GM10248 (cell line): ENCODE measurements at regions of chr7 and their contacts with region 1.

Region 1: DNA sequence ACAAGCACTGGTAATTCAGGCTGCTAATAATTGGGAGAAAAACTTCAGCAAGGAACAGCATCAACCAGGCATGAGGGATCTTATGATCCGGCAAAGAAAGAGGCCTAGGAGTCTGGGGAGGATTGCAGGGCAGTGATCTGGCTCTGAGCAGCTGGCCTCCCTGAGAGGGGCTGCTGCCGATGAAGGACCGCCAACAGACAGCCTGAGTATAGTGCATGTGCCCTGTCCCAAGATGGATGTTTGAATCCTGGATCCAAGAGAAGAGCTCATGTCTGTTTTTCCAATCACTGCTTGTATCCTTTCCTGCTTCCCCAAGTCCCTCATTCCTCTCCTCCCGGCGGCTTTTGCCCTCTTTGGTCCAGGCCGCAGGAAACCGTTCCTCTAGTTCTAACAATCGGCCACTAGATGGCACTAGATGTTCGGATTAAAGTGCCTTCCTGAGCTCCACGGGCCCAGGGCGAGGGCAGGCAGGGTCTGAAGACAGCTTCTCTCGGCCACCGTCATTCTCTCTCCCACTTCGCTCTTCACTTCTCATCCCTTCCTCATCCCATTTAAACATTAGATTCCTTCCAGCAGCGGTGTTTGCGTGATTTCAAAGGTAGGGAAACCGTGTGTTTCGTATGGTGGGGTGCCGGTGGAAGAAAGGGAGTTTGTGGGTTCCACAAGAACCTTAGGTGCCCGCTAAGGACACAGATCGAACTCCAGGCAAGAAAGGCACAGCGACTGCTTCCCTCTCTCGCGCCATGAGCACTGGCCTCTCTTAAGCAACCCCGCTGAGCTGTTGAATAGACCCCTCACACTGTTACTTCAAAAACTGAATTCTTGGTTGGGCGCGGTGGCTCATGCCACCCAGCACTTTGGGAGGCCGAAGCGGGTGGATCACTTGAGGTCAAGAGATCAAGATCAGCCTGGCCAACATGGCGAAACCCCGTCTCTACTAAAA is 82.4 kb downstream of the ADCYAP1R1 start:
- DNase-seq: peak; percentile 75
- CTCF ChIP-seq: peak; percentile 71

Region 2: GRCh38 chr7:30871655-30872054 is 262.9 kb before region 1 on chr7:
- CTCF ChIA-PET with region 1: no interaction called
- POLR2A ChIA-PET with region 1: no interaction called
- DNase-seq: no peak
- CTCF ChIP-seq: no peak

Region 3: DNA sequence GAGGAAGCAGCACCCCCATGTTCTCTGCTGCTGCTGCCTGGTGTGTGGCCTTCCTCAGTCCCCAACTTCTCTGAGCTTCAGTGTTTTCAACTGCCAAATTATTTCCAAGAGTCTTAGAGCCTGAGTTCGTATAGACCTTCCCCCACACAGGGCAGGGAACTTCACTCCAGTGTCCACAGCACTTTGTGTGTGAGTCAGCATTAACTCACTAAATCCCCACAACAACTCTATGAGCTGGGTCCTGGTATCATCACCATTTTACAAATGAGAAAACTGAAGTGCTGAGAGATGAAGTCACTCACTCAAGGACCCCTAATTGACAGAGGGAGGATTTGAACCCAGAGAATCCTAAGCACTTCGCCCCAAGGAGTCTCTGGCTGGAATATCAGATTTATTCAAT is 34.1 kb before region 1 on chr7:
- CTCF ChIA-PET with region 1: interaction called, 14 read pairs
- POLR2A ChIA-PET with region 1: no interaction called
- DNase-seq: no peak
- CTCF ChIP-seq: no peak

Region 4: DNA sequence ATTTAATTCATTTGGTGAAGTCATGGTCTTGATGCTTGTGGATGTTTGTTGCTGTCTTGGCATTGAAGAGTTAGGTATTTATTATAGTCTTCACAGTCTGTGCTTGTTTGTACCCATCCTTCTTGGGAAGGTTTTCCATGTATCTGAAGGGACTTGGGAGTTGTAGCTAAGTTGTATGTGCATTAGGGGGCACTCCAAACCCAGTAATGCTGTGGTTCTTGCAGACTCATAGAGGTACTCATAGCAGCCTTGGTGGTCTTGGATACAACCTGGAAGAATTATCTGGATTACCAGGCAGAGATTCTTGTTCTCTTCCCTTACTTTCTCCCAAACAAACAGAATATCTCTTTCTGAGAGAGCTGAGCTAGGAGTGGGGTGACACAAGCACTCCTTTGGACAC is 10.8 kb after region 1 on chr7:
- CTCF ChIA-PET with region 1: interaction called, 19 read pairs
- POLR2A ChIA-PET with region 1: no interaction called
- DNase-seq: no peak
- CTCF ChIP-seq: no peak

Region 5: DNA sequence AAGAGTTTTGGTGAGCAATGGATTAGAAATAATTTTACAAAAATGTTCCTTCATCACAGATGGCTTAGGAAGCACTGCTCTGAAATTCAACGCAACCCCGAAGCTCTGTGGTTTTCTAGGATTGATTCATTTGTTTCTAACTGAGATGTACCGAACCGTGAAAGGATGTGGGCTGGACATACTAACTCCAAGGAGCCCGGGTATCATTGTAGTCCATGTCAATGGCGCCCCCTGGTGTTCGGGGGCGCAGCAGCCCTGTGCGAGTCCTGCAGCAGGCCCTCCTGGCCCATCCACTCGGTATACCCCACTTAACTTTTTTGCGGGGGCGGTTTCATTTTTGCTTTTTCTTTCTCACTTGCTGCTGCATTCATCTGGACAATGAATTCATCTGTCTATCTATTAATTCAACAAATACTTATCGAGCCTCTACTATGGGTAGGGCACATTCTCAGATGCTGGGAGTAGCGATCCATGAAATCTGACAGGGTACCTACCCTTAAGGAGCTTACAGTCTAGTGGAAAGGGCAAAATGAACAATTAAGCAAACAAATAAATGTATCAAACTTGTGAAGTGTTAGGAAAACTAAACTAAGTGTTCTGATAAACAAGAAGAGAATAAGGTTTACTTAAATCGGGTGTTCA is 354.2 kb after region 1 on chr7:
- CTCF ChIA-PET with region 1: interaction called, 17 read pairs
- POLR2A ChIA-PET with region 1: no interaction called
- DNase-seq: peak; percentile 74
- CTCF ChIP-seq: peak; percentile 65

Region 6: DNA sequence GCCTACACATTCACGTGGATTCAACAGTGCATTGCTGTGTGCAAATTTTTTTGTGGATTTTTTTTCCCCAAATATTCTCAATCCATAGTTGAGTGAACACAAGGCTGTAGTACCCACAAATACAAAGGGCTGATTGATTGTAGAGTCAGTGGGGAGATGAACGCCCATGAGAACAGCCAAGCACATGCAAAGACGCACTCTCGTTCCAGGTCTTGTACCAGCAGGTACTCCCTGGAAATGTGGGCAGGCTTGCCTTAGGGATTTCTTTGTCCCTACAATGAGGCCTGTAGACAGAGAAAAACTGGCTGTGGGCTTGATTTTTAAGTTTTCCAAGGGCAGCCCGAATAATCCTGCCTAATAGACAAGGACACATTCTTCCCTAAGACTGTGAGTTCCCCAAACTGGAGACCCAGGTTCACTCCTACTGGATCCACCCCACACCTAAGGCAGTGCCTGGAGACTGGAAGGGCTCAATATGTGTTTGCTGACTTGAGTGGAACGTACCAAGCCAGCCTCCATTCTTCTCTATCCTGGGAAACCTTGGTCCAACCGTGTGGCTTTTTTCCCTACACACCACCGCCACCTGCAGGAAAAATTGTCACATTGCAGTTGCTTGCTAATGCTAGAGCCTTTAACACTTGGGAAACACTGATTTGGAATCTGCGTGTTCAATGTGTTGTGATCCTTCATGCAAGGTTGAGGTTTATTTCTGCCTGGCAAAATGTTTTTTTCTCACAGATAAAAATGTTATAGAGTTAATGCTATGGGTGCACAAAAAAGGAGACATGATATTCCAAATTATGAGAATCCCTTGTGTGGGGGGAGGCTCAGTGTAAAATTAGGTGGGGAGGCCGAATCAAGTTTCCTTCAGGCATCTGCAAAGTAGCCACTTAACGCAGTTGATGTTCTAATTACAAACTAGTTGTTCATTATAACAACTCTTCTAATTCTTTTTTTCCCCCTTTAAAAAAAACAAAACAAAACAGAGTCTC is 601.8 kb after region 1 on chr7:
- CTCF ChIA-PET with region 1: interaction called, 13 read pairs
- POLR2A ChIA-PET with region 1: no interaction called
- DNase-seq: peak; percentile 44
- CTCF ChIP-seq: peak; percentile 80